Esophagus squamous epithelium (tissue), 5 donors: ENCODE measurements at regions of chr12 and their contacts with region 1.

Region 1: DNA sequence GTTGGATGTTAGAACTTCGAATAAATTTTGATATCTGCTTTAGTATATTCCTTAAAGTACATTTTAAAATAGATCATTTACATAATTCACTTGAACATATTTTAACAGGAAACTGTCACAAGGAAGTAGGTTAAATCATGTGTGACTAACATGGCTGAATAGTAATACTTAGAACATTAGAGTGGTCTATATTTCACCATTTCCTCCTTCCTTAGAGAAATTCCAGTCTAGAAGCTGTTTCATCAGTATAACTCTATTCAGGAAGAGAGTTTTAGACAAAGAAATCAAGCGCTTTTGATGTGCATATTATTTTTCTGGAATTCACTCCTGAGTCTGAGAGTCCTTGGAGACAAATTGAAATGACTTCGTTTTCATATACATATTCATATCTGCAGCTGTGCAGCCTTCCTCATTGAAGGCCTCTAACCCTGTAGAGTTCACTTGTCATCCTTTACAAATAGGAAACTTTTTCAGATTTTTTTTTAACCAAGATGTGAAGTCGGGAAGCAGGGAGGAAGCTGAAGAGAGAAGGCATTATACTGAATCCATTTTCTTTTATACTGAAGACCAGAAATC is 28.4 kb downstream of the IRAK3 start:
- DNase-seq: no peak
- H3K4me3 ChIP-seq: no peak overlapping the region
- H3K27ac ChIP-seq: no peak overlapping the region
- H3K4me1 ChIP-seq: no peaks in the 10 kb centered on the region
- H3K27me3 ChIP-seq: no peaks in the 10 kb centered on the region
- CTCF ChIP-seq: no peak
- POLR2A ChIP-seq: no peak

Region 2: DNA sequence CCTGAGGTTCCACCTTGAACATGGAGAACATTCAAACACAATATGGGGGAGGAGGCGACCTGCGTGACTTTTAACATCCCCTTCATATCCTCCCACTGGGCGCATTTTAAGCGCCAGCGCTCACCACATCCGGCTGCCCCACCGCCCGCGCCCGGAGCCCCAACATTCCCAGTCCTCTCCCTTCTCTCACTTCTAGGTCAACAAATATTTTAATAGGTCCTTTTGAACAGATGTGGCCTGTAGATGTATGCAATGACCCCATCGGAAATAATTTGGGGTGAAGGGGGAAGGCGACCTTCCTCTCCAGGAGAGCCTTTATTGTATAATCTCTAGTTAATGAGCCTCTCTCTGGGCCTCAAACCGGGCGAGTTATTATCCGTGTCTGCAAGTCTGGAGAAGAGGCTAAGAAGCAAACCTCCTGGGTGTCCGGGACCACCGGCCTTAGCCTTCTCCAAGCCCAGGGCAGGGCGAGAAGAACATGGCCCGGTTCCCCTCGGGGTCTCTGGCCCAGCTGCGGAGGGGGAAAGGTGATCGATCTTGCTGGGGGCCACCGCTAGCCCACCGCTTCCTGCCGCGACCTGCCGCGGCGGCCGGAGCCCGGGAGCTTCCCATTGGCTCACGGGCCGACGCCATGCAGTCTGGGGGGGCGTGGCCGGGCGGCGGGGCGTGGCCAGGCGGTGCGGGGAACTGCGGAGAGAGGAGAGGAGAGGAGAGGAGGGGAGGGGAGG is 476.4 kb before region 1 on chr12:
- intact Hi-C with region 1: loop called (anchors 5 kb)
- DNase-seq: no peak
- H3K4me3 ChIP-seq: peak overlapping the region; percentile 46 to 73 (median 57)
- H3K27ac ChIP-seq: peak overlapping the region in 1 of 4 donors; percentile 16
- H3K4me1 ChIP-seq: peaks cover 0 to 23% (median 16%) of the 10 kb centered on the region in 3 donors
- H3K27me3 ChIP-seq: peaks cover 0 to 59% (median 4%) of the 10 kb centered on the region in 4 donors
- CTCF ChIP-seq: no peak
- POLR2A ChIP-seq: no peak

Region 3: DNA sequence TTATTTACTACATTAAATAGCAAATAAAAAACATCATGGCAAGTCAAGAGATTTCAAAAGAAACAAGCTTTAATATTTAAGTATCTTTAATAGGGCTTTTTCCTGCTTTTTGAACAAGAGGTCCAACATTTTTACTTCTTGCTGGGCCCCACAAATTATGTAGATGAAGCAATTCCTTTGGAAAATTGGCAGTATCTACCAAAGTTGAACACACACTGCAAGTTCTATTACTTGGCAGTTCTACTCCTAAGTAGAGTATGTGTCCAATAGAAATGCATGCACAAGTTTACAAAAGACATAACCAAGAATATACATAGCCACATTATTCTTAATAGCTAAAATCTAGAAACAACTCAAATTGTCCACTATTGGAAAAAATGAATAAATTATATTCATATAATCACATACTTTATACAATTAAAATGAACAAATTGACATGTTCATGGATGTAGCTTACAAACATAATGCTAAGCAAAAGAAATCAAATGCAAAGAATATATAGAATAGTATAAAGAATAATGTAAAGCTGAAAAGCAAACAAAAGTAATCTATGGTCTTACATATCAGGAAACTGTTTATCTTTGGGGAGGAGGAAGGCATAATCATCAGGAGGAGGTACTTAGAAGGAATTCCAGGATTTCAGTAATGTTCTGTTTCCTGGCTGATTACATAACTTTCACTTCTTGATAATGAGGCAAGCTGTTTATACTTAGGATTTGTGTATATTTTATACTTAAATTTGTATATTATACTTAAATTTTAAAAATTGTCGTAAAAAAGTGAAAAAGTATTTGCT is 41.1 kb before region 1 on chr12:
- intact Hi-C with region 1: no loop called
- DNase-seq: no peak
- H3K4me3 ChIP-seq: no peak overlapping the region
- H3K27ac ChIP-seq: no peak overlapping the region
- H3K4me1 ChIP-seq: peaks cover 0 to 5% (median 0%) of the 10 kb centered on the region in 3 donors
- H3K27me3 ChIP-seq: peaks cover 0 to 15% (median 0%) of the 10 kb centered on the region in 4 donors
- CTCF ChIP-seq: no peak
- POLR2A ChIP-seq: no peak